ENCODE measurements at regions of chr3 and their contacts with region 1.

Region 1: DNA sequence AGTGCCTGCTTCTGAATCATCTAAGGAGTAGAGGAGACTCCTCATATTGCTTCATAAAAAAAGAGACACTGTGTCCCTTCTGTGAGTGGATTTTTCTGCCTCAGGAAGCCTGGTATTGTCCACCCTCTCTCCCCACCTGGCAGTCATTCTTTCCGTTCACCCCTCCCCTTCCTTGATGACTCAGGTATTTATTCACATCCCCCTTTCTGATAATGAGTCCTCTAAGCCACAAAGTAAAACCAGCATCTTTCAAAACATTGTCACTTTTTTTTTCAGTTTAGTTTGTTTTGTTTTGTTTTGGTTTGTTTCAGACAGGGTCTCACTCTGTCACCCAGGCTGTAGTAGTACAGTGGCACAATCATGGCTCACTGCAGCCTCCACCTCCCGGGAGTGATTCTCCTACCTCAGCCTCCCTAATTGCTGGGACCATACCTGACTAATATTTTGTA is 65.2 kb upstream of the UBE2E1 start:
- DNase-seq: peak; percentile 97
- ATAC-seq: peak; percentile 70
- H3K4me3 ChIP-seq: peak overlapping the region; percentile 64
- H3K27ac ChIP-seq: peak overlapping the region; percentile 96
- H3K4me1 ChIP-seq: peaks cover 59% of the 10 kb centered on the region
- H3K27me3 ChIP-seq: no peaks in the 10 kb centered on the region
- CTCF ChIP-seq: no peak

Region 2: GRCh38 chr3:23324745-23325144 is 415.8 kb before region 1 on chr3:
- CTCF ChIA-PET with region 1: no interaction called
- POLR2A ChIA-PET with region 1: no interaction called
- intact Hi-C with region 1: loop called (anchors 5 kb)
- DNase-seq: peak; percentile 73
- ATAC-seq: peak; percentile 76
- H3K4me3 ChIP-seq: peak overlapping the region; percentile 31
- H3K27ac ChIP-seq: peak overlapping the region; percentile 29
- H3K4me1 ChIP-seq: peaks cover 43% of the 10 kb centered on the region
- H3K27me3 ChIP-seq: no peaks in the 10 kb centered on the region
- CTCF ChIP-seq: no peak

Region 3: DNA sequence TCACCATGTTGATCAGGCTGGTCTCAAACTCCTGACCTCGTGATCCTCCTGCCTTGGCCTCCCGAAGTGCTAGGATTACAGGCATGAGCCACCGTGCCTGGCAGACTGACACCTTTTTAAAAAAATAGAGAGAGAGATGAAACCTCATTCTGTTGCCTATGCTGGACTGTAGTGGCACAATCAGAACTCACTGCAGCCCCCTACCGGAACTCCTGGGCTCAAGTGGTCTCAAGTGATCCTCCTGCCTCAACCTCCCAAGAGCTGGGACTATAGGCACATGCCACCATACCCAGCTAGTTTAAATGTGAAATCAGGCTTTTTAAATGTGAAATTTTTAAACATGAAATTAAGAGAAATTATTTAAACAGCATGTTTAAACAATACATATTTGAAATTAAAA is 199.9 kb before region 1 on chr3:
- CTCF ChIA-PET with region 1: no interaction called
- POLR2A ChIA-PET with region 1: no interaction called
- intact Hi-C with region 1: no loop called
- DNase-seq: no peak
- ATAC-seq: no peak
- H3K4me3 ChIP-seq: no peak overlapping the region
- H3K27ac ChIP-seq: no peak overlapping the region
- H3K4me1 ChIP-seq: no peaks in the 10 kb centered on the region
- H3K27me3 ChIP-seq: no peaks in the 10 kb centered on the region
- CTCF ChIP-seq: no peak

Region 4: DNA sequence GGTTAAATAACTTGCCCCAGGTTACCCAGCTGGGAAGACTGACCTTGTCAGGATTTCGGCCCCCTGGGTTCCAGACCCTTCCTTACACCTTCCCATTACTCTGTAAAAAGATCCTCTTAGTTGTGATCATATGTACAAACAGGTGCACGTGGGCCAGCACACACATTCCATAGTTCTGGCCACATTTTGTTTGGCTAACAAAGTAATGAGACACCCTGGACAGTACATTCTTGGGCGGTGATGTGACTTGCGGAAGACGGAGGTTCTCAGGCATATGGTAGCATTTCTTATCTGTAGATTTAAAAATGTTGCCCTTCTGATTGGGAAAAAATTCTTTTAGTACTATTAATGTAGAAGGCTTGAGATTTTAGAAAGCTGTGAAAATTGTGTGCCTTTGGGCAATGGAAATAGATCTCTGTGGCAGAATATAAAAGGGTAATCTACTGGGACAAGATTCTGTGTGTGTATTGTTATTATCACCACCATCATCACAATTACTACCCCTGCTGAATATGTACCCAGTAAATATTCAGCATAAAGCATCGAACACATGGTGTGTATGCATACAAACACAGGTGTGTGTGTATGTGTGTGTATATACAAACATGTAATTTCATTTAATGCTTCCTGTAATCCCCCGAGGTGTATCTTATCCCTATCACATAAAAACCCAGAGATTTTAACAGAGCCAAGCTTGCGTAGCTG is 140.2 kb before region 1 on chr3:
- CTCF ChIA-PET with region 1: no interaction called
- POLR2A ChIA-PET with region 1: no interaction called
- intact Hi-C with region 1: loop called (anchors 2 kb)
- DNase-seq: peak; percentile 95
- ATAC-seq: peak; percentile 100
- H3K4me3 ChIP-seq: no peak overlapping the region
- H3K27ac ChIP-seq: peak overlapping the region; percentile 64
- H3K4me1 ChIP-seq: peaks cover 21% of the 10 kb centered on the region
- H3K27me3 ChIP-seq: no peaks in the 10 kb centered on the region
- CTCF ChIP-seq: no peak

Region 5: DNA sequence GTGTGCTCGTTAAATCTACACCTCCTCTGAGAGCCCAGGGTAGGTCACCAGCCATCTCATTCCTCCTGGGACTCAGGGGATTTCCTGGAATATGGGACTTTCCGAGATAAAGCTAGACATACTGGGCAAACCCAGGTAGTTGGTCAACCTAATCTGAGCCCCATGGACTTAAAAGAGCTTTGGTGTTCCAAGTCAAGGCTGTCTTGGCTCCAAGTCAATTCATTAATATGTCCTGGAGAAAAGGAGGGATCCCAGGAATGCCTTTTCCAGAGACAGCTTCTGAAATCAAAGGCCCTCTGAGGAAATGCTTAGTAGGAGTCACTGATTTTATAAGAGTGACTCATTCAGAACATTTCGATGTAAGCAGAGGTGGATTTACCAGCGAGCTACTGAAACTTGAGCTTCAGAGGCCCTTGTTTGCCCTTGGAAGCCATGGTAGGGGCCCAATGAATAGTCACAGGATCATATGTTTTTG is 72.1 kb before region 1 on chr3:
- CTCF ChIA-PET with region 1: no interaction called
- POLR2A ChIA-PET with region 1: no interaction called
- intact Hi-C with region 1: loop called (anchors 1 kb)
- DNase-seq: peak; percentile 97
- ATAC-seq: peak; percentile 54
- H3K4me3 ChIP-seq: peak overlapping the region; percentile 7; the same call in 1 of the 2 replicates
- H3K27ac ChIP-seq: peak overlapping the region; percentile 96
- H3K4me1 ChIP-seq: peaks cover 74% of the 10 kb centered on the region
- H3K27me3 ChIP-seq: no peaks in the 10 kb centered on the region
- CTCF ChIP-seq: no peak

Region 6: DNA sequence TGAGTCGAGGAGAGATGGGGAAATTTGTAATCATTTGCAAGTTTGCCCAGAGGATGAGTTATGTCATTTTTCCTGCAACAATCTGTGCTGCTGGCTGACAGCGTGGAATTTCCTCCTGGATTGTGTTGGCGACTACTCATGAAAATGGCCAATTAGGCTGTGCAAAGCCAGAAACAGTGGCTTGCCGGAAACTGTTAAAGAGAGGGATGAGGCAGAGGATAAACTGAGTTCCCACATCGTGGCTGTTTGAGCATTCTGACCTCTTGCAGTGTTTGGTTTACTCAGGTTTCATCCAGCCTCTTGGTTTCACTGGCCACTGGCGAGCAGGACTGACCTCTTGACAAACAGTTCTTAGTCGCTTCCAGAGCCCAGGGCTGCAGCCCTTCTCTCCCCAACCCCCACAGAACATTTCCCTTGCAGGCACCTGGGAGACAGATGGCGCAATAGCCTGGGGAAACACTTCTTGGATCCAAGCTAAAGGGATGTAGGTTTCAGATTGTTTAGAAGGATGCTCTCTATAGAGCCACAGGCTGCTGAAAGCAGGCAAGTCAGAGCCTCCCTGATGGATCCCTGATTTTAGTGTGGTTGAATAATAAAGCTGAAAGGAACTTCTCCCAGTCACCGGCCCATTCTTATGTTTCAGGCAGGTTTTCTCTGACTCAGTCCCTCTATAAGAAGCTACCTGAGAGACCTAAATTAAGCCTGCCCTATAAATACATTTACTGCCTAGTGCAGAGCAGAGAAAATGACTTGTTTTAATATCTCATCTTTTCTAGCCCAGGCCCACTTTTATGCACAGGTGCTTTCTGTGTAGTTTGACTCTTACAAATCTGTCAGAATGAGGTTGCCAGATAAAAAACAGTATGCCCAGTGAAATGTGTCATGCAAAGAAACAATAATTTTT is 27.6 kb before region 1 on chr3:
- CTCF ChIA-PET with region 1: interaction called, 4 read pairs
- POLR2A ChIA-PET with region 1: interaction called, 3 read pairs
- intact Hi-C with region 1: loop called (anchors 2 kb)
- DNase-seq: peak; percentile 82
- ATAC-seq: peak; percentile 92
- H3K4me3 ChIP-seq: peak overlapping the region; percentile 47; the same call in 1 of the 2 replicates
- H3K27ac ChIP-seq: peak overlapping the region; percentile 17
- H3K4me1 ChIP-seq: peaks cover 19% of the 10 kb centered on the region
- H3K27me3 ChIP-seq: no peaks in the 10 kb centered on the region
- CTCF ChIP-seq: peak; percentile 62

Region 7: DNA sequence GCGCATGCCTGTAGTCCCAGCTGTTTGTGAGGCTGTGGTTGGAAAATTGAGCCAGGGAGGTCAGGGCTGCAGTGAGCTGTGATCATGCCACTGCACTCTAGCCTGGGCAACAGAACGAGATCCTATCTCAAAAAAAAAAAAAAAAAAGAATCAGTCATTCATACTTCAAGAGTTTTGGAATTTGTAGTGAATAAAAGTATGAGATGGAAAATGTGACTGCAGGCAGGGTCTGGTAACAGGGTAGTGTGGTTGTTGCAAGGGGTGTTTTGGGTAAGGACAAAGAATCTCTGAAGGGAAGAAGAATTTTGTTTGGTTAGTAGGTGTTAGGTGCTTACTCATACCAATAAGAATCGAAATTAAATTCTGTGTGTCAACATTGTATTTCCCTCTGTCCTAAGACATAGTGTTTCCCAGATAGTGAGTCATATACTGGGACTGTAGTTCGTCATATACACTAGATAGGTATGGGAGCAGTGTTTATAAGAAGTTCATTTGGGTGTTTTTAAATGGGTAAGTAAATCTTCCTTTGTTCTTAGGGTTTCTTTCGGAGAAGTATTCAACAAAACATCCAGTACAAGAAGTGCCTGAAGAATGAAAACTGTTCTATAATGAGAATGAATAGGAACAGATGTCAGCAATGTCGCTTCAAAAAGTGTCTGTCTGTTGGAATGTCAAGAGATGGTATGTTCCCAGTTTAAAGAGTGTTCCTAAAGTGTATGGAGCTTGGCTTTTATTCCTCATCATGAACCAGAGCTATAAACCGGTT is 218.8 kb after region 1 on chr3:
- CTCF ChIA-PET with region 1: no interaction called
- POLR2A ChIA-PET with region 1: no interaction called
- intact Hi-C with region 1: loop called (anchors 10 kb)
- DNase-seq: peak; percentile 96
- ATAC-seq: peak; percentile 94
- H3K4me3 ChIP-seq: peak overlapping the region; percentile 12; the same call in 1 of the 2 replicates
- H3K27ac ChIP-seq: peak overlapping the region; percentile 76
- H3K4me1 ChIP-seq: peaks cover 41% of the 10 kb centered on the region
- H3K27me3 ChIP-seq: no peaks in the 10 kb centered on the region
- CTCF ChIP-seq: no peak